Sigmoid colon (tissue), 7 donors: ENCODE measurements at regions of chr18 and their contacts with region 1.

Region 1: DNA sequence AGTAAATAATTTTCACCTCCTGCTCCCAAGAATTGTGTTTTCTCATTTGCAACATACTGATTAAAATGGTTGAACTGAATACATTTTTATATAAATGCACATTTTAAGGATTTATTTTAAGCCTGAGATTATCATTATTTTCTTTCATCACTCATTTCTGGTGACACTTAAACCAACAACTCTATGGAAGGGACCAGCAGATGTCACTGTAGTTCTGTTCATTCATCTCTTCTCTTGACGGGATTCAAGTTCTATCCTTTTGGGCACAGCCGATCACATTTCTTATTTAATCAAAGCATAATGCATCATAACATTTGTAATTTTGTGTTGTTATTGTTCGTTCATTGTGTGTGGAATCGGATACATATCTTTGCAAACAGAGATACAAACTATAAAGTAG is 417.9 kb downstream of the HRH4 start:
- DNase-seq: no peak
- H3K4me3 ChIP-seq: no peak overlapping the region
- H3K27ac ChIP-seq: no peak overlapping the region
- H3K4me1 ChIP-seq: no peaks in the 10 kb centered on the region
- H3K27me3 ChIP-seq: no peaks in the 10 kb centered on the region
- CTCF ChIP-seq: peak in 3 of 4 experiments; percentile 22 to 47 (median 24)
- EP300 ChIP-seq: no peak
- POLR2A ChIP-seq: no peak

Region 2: GRCh38 chr18:25832001-25832604 is 953.8 kb after region 1 on chr18:
- intact Hi-C with region 1: loop called (anchors 5 kb)
- DNase-seq: no peak
- H3K4me3 ChIP-seq: no peak overlapping the region
- H3K27ac ChIP-seq: no peak overlapping the region
- H3K4me1 ChIP-seq: peaks cover 0 to 14% (median 9%) of the 10 kb centered on the region in 4 donors
- H3K27me3 ChIP-seq: no peaks in the 10 kb centered on the region
- CTCF ChIP-seq: peak in 3 of 4 experiments; percentile 16 to 50 (median 22)
- EP300 ChIP-seq: no peak
- POLR2A ChIP-seq: no peak

Region 3: GRCh38 chr18:25896178-25896780 is 1018.0 kb after region 1 on chr18:
- intact Hi-C with region 1: loop called (anchors 2 kb)
- DNase-seq: no peak
- H3K4me3 ChIP-seq: no peak overlapping the region
- H3K27ac ChIP-seq: no peak overlapping the region
- H3K4me1 ChIP-seq: no peaks in the 10 kb centered on the region
- H3K27me3 ChIP-seq: no peaks in the 10 kb centered on the region
- CTCF ChIP-seq: peak in 3 of 4 experiments; percentile 52 to 76 (median 63)
- EP300 ChIP-seq: no peak
- POLR2A ChIP-seq: no peak